ENCODE measurements at regions of chr22 and their contacts with region 1.

Region 1: GRCh38 chr22:20156611-20157429 is 6.0 kb upstream of the CCDC188 start:
- DNase-seq: peak; percentile 71 to 100 (median 90)
- ATAC-seq: peak; percentile 78 to 97 (median 88)
- H3K4me3 ChIP-seq: no peak overlapping the region
- H3K27ac ChIP-seq: no peak overlapping the region
- H3K4me1 ChIP-seq: no peaks in the 10 kb centered on the region
- H3K27me3 ChIP-seq: no peaks in the 10 kb centered on the region
- CTCF ChIP-seq: peak; percentile 96 to 98 (median 96)

Region 2: DNA sequence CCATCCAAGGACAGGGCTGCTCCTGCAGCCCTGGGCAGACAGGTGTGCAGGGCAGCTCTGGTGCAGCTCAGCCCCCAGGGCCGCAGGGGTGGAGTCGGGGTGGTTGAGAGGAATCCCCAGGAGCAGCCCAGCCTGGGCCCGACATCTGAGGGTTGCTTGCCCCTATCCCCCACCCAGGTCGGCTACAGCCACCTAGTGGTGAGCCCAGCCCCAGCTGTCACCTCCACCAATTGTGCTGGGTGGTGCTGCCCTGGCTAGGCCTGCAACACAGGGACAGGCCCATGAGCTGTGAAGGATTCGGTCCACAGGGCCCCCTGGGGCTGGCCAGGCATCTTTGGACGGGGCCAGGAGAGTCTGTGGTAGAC is 81.7 kb after region 1 on chr22:
- intact Hi-C with region 1: loop called in 1 of 3 experiments (anchors 10 kb)
- DNase-seq: peak in 5 of 6 donors; percentile 48 to 84 (median 73)
- ATAC-seq: peak; percentile 81 to 90 (median 84)
- H3K4me3 ChIP-seq: no peak overlapping the region
- H3K27ac ChIP-seq: peak overlapping the region in 1 of 4 donors; percentile 37
- H3K4me1 ChIP-seq: peaks cover 0 to 5% (median 5%) of the 10 kb centered on the region in 3 donors
- H3K27me3 ChIP-seq: no peaks in the 10 kb centered on the region
- CTCF ChIP-seq: peak; percentile 14 to 66 (median 49)

Region 3: GRCh38 chr22:20279662-20280134 is 122.9 kb after region 1 on chr22:
- intact Hi-C with region 1: loop called (anchors 2 to 10 kb)
- DNase-seq: no peak
- ATAC-seq: no peak
- H3K4me3 ChIP-seq: no peak overlapping the region
- H3K27ac ChIP-seq: no peak overlapping the region
- H3K4me1 ChIP-seq: no peaks in the 10 kb centered on the region
- H3K27me3 ChIP-seq: no peaks in the 10 kb centered on the region
- CTCF ChIP-seq: no peak

Measured in pancreas (tissue), 10 donors.